Caco-2 (cell line): ENCODE measurements at regions of chr12 and their contacts with region 1.

Region 1: GRCh38 chr12:7092229-7092985 is at the start of gene C1R:
- DNase-seq: peak; percentile 71 to 81
- H3K4me3 ChIP-seq: peak within 1 kb of the TSS; percentile 11
- H3K4me3 Mint-ChIP-seq: peak within 1 kb of the TSS; percentile 56
- H3K27ac Mint-ChIP-seq: peak within 1 kb of the TSS; percentile 76
- H3K4me1 ChIP-seq: peaks cover 5% of the 10 kb centered on the region; the same call in 1 of the 2 replicates
- H3K4me1 Mint-ChIP-seq: no peaks in the 10 kb centered on the region
- H3K27me3 ChIP-seq: no peaks in the 10 kb centered on the region
- H3K27me3 Mint-ChIP-seq: no peaks in the 10 kb centered on the region
- CTCF ChIP-seq: peak; percentile 94 to 97
- total RNA-seq, gene C1R: 3.9 and 4.2 TPM in 2 replicates

Region 2: GRCh38 chr12:5154091-5154490 is 1938.3 kb before region 1 on chr12:
- CTCF ChIA-PET with region 1: no interaction called
- POLR2A ChIA-PET with region 1: no interaction called
- intact Hi-C with region 1: no loop called
- DNase-seq: no peak
- H3K4me3 ChIP-seq: no peak overlapping the region
- H3K4me3 Mint-ChIP-seq: no peak overlapping the region
- H3K27ac Mint-ChIP-seq: no peak overlapping the region
- H3K4me1 ChIP-seq: no peaks in the 10 kb centered on the region
- H3K4me1 Mint-ChIP-seq: no peaks in the 10 kb centered on the region
- H3K27me3 ChIP-seq: no peaks in the 10 kb centered on the region; the same call in 1 of the 2 replicates
- H3K27me3 Mint-ChIP-seq: peaks cover 51% of the 10 kb centered on the region
- CTCF ChIP-seq: no peak

Region 3: GRCh38 chr12:6978609-6979011 is 113.8 kb before region 1 on chr12:
- CTCF ChIA-PET with region 1: interaction called, 3 read pairs
- POLR2A ChIA-PET with region 1: no interaction called
- intact Hi-C with region 1: loop called (anchors 1 kb)
- DNase-seq: peak; percentile 73 to 74
- H3K4me3 ChIP-seq: no peak overlapping the region
- H3K4me3 Mint-ChIP-seq: peak overlapping the region; percentile 17
- H3K27ac Mint-ChIP-seq: peak overlapping the region; percentile 98
- H3K4me1 ChIP-seq: peaks cover 60% of the 10 kb centered on the region
- H3K4me1 Mint-ChIP-seq: peaks cover 71% of the 10 kb centered on the region
- H3K27me3 ChIP-seq: no peaks in the 10 kb centered on the region
- H3K27me3 Mint-ChIP-seq: no peaks in the 10 kb centered on the region
- CTCF ChIP-seq: peak in 1 of 2 experiments; percentile 16

Region 4: GRCh38 chr12:7018350-7019042 is 73.9 kb before region 1 on chr12 and contains the start of gene LPCAT3:
- CTCF ChIA-PET with region 1: interaction called, 3 read pairs
- POLR2A ChIA-PET with region 1: no interaction called
- intact Hi-C with region 1: loop called (anchors 5 kb)
- DNase-seq: peak; percentile 99 to 100
- H3K4me3 ChIP-seq: peak within 1 kb of the TSS; percentile 65
- H3K4me3 Mint-ChIP-seq: peak within 1 kb of the TSS; percentile 88
- H3K27ac Mint-ChIP-seq: peak within 1 kb of the TSS; percentile 72
- H3K4me1 ChIP-seq: peaks cover 19% of the 10 kb centered on the region
- H3K4me1 Mint-ChIP-seq: peaks cover 22% of the 10 kb centered on the region
- H3K27me3 ChIP-seq: no peaks in the 10 kb centered on the region
- H3K27me3 Mint-ChIP-seq: no peaks in the 10 kb centered on the region
- CTCF ChIP-seq: peak; percentile 95 to 96
- total RNA-seq, gene LPCAT3: 142 and 155 TPM in 2 replicates

Region 5: GRCh38 chr12:7060353-7060954 is 32.0 kb before region 1 on chr12 and contains the start of gene C1S:
- CTCF ChIA-PET with region 1: interaction called, 9 read pairs
- POLR2A ChIA-PET with region 1: no interaction called
- intact Hi-C with region 1: loop called (anchors 1 kb)
- DNase-seq: peak; percentile 78 to 81
- H3K4me3 ChIP-seq: no peak within 1 kb of the TSS
- H3K4me3 Mint-ChIP-seq: no peak within 1 kb of the TSS
- H3K27ac Mint-ChIP-seq: peak within 1 kb of the TSS; percentile 38
- H3K4me1 ChIP-seq: peaks cover 20% of the 10 kb centered on the region
- H3K4me1 Mint-ChIP-seq: peaks cover 21% of the 10 kb centered on the region
- H3K27me3 ChIP-seq: no peaks in the 10 kb centered on the region
- H3K27me3 Mint-ChIP-seq: no peaks in the 10 kb centered on the region
- CTCF ChIP-seq: peak; percentile 80 to 86
- total RNA-seq, gene C1S: 5.3 and 6.1 TPM in 2 replicates

Region 6: DNA sequence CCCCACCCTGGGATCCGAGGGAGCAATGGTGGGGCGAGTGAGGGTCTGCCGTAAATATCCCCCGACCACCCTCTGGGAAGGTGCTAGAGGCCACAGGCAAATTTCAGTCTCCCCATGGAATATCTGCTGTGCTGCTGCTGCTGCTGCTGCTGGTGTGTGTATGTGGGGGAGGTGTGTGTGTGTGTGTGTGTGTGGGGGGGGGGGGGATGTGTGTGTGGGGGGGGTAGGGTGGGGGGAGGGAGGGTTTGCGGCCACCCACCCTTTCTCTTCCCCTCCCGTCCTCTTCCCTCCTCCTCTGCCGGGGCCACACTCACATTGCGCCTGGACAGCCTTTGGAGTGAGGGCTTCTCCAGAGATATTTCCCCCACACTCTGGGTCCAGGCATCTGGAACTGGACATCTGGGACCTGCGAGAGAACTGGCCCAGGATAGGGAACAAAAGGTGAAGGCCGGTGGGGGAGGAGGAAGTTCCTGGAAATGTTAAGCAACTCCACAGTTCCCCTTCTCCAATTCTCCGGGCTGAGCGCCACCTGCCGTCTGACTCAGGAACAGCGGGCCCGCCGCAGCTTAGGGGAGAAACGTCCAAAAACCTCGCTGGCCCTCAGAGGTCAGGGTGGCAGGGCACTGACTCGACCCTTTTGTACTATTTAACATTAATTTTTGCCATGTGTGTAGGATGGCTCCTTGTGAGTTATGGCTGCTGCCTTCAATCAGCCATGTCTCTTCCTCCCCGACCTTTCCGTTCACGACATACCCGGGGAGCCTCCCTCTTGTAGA is 16.6 kb after region 1 on chr12 and contains the start of gene C1RL:
- CTCF ChIA-PET with region 1: interaction called, 18 read pairs
- POLR2A ChIA-PET with region 1: interaction called, 13 read pairs
- intact Hi-C with region 1: loop called (anchors 1 kb)
- DNase-seq: peak; percentile 92 to 96
- H3K4me3 ChIP-seq: peak within 1 kb of the TSS; percentile 80
- H3K4me3 Mint-ChIP-seq: peak within 1 kb of the TSS; percentile 85
- H3K27ac Mint-ChIP-seq: peak within 1 kb of the TSS; percentile 74
- H3K4me1 ChIP-seq: no peaks in the 10 kb centered on the region
- H3K4me1 Mint-ChIP-seq: peaks cover 12% of the 10 kb centered on the region
- H3K27me3 ChIP-seq: no peaks in the 10 kb centered on the region
- H3K27me3 Mint-ChIP-seq: no peaks in the 10 kb centered on the region
- CTCF ChIP-seq: peak; percentile 98 to 99
- total RNA-seq, gene C1RL: 38.7 and 40.2 TPM in 2 replicates

Region 7: GRCh38 chr12:7439579-7440505 is 347.4 kb after region 1 on chr12:
- CTCF ChIA-PET with region 1: interaction called, 10 read pairs
- POLR2A ChIA-PET with region 1: no interaction called
- intact Hi-C with region 1: no loop called
- DNase-seq: peak; percentile 90 to 92
- H3K4me3 ChIP-seq: peak overlapping the region; percentile 66
- H3K4me3 Mint-ChIP-seq: peak overlapping the region; percentile 76
- H3K27ac Mint-ChIP-seq: peak overlapping the region; percentile 51
- H3K4me1 ChIP-seq: no peaks in the 10 kb centered on the region
- H3K4me1 Mint-ChIP-seq: peaks cover 14% of the 10 kb centered on the region
- H3K27me3 ChIP-seq: no peaks in the 10 kb centered on the region
- H3K27me3 Mint-ChIP-seq: peaks cover 14% of the 10 kb centered on the region
- CTCF ChIP-seq: peak in 1 of 2 experiments; percentile 23